ENCODE measurements at regions of chr13 and their contacts with region 1.

Region 1: DNA sequence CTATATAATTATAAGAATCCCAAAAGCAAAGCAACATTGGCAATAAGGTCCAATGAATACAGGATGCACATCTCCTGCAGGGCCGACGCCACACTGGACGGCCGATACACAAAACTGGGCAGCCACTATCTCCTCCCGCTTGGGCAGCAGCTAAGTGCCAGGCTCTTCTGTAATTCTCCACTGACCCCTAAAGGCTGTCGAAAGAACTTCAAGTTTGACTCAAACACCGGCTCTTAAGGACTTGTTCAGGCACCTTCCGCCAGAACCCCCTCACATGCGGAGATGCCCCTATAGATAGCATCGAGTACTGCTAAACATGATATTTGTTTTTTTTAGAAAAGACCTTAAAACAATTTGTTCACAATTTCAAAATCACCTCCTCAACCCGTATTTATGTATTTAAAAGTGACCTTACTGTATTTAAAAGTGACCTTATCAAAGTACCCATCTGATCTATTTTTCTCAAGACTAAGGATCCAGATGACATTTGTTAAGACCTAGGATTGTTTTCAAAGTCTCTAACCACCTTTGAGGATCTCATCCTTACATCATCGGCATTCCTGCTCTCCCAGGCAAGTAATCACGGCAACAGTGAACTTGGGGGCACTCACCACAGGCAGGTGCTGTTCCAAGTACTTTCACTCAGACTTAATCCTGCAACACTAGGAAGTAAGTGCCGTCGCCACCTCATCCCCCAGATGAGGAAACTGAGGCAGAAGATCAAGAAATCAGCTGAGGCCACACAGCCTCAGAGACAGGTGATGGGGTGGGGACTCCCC is 77.8 kb downstream of the TUBGCP3 start:
- DNase-seq: peak; percentile 23
- H3K4me3 ChIP-seq: no peak overlapping the region
- H3K27ac ChIP-seq: no peak overlapping the region
- H3K27me3 ChIP-seq: no peaks in the 10 kb centered on the region
- CTCF ChIP-seq: peak; percentile 60

Region 2: DNA sequence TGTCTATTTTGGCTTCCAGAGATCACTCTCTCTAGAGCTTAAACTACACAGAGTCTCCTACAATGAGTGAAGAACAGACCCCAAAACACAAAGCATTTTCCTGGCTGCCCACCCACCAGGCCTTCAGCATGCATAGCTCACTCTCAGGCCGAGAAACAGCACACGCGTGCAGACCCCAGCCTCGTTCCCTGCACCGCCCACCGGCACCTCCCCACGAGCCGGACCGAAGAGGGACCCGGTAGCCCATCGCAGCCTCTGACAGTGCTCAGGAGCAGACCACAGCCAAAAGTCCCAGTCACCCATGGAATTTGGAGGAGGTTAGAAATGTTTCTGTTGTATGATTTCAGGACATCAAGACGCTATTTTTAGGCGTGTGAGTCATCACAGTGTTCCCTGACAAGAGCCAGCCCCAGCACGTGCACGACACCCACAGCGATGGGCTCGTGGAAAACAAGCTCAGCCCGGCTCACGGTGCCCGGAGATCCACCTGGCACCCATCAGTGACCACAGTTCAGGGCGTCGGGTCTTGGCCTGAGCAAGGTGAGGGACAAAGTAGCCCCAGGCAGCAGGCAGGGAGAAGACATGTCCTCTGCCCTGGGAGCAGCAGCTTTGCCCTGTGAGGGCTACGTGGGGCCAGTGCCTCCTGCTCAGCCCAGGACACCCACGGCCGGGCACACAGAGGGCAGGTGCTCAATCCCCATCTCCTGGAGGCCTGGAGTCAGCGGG is 184.1 kb before region 1 on chr13:
- CTCF ChIA-PET with region 1: no interaction called
- POLR2A ChIA-PET with region 1: no interaction called
- DNase-seq: no peak
- H3K4me3 ChIP-seq: no peak overlapping the region
- H3K27ac ChIP-seq: no peak overlapping the region
- H3K27me3 ChIP-seq: no peaks in the 10 kb centered on the region
- CTCF ChIP-seq: no peak

Region 3: DNA sequence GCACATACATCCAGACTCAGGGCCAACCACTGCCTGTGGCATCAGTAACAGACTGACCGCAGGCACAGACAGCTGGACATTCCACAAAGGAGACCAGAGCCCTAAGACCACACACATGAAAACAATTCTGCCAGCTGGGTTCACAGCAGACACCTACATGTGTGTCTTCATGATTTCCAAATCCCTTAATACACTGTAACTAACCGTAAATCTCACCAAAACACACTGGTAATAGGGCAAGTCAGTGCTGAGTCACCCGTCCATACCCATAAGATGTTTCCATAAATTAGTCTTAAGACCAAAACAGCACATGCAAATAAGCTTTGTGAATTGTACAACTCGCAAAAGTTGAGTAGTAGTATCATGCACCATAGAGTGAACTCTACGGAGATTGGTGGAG is 12.4 kb after region 1 on chr13:
- CTCF ChIA-PET with region 1: interaction called, 12 read pairs
- POLR2A ChIA-PET with region 1: no interaction called
- DNase-seq: no peak
- H3K4me3 ChIP-seq: no peak overlapping the region
- H3K27ac ChIP-seq: no peak overlapping the region
- H3K27me3 ChIP-seq: no peaks in the 10 kb centered on the region
- CTCF ChIP-seq: no peak